ENCODE measurements at regions of chr12 and their contacts with region 1.

Region 1: DNA sequence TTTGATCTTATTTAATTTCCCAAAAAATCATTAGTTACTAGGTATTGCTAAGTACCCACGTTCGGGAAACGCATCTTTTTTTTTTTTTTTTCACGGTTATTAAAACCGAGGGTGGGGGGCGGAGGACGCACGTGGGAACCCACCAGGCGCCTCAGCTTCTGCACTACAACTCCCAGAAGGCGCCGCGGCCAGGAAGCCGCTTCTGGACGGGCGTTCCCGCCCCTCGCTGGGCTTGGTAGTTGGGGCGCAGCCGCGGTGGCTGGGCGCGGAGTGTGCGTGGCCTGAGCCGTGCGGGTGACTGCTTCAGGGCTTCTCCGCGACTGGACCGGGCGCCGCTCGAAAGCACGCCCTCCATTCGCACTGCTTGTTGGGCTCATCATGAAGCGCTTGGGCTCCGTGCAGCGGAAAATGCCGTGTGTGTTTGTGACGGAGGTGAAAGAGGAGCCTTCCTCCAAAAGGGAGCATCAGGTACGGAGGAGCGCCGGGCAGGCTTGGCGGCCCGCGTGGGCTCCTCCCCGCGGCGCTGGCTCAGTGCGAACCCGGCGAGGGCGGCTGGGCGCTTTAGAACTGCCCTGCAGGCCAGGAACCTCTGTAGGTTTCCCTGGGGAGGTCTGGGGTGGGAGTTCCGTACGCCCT is 6.2 kb upstream of the C12orf50 start:
- DNase-seq: peak; percentile 69 to 85
- H3K4me3 ChIP-seq: peak overlapping the region; percentile 74
- H3K27ac ChIP-seq: peak overlapping the region; percentile 27; the same call in 1 of the 2 replicates
- H3K4me1 ChIP-seq: peaks cover 20% of the 10 kb centered on the region
- H3K27me3 ChIP-seq: no peaks in the 10 kb centered on the region
- CTCF ChIP-seq: no peak

Region 2: DNA sequence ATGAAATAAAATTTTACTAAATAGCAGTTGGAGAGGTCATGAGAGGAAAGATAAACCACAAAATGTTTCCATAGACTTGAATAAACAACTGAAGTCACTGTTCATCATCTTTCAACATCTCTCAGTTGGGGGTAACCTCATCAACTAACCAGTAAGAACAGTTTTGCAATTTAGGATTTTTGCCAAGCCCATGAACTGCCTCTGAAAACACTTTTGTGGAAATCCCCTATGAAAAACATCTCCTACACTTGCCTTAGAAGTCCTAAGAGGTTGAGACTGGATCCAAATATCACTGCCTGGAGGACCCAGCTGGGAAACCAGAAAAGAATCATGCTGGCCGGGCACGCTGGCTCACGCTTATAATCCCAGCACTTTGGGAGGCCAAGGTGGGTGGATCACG is 279.3 kb before region 1 on chr12:
- CTCF ChIA-PET with region 1: no interaction called
- POLR2A ChIA-PET with region 1: no interaction called
- intact Hi-C with region 1: no loop called
- DNase-seq: no peak
- H3K4me3 ChIP-seq: no peak overlapping the region
- H3K27ac ChIP-seq: no peak overlapping the region
- H3K4me1 ChIP-seq: no peaks in the 10 kb centered on the region
- H3K27me3 ChIP-seq: no peaks in the 10 kb centered on the region
- CTCF ChIP-seq: no peak

Region 3: GRCh38 chr12:87967871-87968270 is 67.5 kb before region 1 on chr12:
- CTCF ChIA-PET with region 1: no interaction called
- POLR2A ChIA-PET with region 1: no interaction called
- intact Hi-C with region 1: no loop called
- DNase-seq: no peak
- H3K4me3 ChIP-seq: no peak overlapping the region
- H3K27ac ChIP-seq: no peak overlapping the region
- H3K4me1 ChIP-seq: no peaks in the 10 kb centered on the region
- H3K27me3 ChIP-seq: no peaks in the 10 kb centered on the region
- CTCF ChIP-seq: no peak

Region 4: DNA sequence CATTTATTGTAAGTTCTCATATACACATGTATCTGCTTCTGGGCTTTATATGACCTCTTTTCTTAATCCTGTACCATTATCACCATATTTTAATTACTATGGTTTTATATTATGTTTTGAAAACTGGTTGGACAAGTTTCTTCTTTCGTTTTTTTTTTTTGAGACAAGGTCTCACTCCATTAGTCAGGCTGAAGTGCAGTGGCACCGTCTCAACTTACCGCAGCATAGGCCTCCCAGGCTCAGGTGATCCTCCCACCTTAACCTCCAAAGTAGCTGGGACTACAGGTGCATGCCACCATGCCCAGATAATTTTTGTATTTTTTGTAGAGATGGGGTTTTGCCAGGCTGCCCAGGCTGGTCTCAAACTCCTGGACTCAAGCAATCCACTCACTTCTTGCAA is 1444.6 kb after region 1 on chr12:
- CTCF ChIA-PET with region 1: no interaction called
- POLR2A ChIA-PET with region 1: interaction called, 13 read pairs
- intact Hi-C with region 1: no loop called
- DNase-seq: no peak
- H3K4me3 ChIP-seq: no peak overlapping the region
- H3K27ac ChIP-seq: no peak overlapping the region
- H3K4me1 ChIP-seq: no peaks in the 10 kb centered on the region
- H3K27me3 ChIP-seq: no peaks in the 10 kb centered on the region
- CTCF ChIP-seq: no peak